Activated CD8-positive, alpha-beta T cell treated with anti-CD3 and anti-CD28 coated beads, Interleukin-2, amount 10 ng/mL, durations not matched to agents 7 days and 5 days (primary cell): ENCODE measurements at regions of chr2 and their contacts with region 1.

Region 1: GRCh38 chr2:128090945-128091725 is at the start of gene UGGT1:
- DNase-seq: peak; percentile 96
- ATAC-seq: peak; percentile 95
- H3K4me3 Mint-ChIP-seq: peak within 1 kb of the TSS; percentile 83
- H3K27ac Mint-ChIP-seq: peak within 1 kb of the TSS; percentile 93
- H3K4me1 Mint-ChIP-seq: peaks cover 41% of the 10 kb centered on the region
- H3K27me3 Mint-ChIP-seq: no peaks in the 10 kb centered on the region
- total RNA-seq, gene UGGT1: 60.3 to 63.7 TPM

Region 2: DNA sequence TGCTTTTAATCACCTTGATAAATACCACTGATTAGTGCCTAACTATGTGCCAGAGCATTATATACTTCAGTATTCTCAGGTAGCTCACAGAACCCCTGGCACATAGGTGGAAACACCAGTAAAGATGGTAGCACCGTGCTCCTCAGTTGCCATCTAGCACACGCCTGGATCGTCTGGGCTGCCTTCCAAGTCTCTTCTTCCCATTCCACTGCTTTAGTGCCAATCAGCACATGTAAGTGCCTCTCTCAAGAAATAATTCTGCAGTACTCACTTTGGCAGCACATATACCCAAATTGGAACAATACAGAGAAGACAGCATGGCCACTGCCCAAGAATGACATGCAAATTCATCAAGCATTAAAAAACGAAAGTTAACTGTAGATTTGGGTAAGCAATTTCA is 246.2 kb before region 1 on chr2:
- CTCF ChIA-PET with region 1: no interaction called
- POLR2A ChIA-PET with region 1: no interaction called
- DNase-seq: no peak
- ATAC-seq: no peak
- H3K4me3 Mint-ChIP-seq: no peak overlapping the region
- H3K27ac Mint-ChIP-seq: no peak overlapping the region
- H3K4me1 Mint-ChIP-seq: peaks cover 10% of the 10 kb centered on the region
- H3K27me3 Mint-ChIP-seq: no peaks in the 10 kb centered on the region

Region 3: GRCh38 chr2:128027801-128028667 is 63.1 kb before region 1 on chr2 and contains the start of gene SAP130:
- CTCF ChIA-PET with region 1: interaction called, 4 read pairs
- POLR2A ChIA-PET with region 1: interaction called, 54 read pairs
- DNase-seq: peak; percentile 99
- ATAC-seq: peak; percentile 77
- H3K4me3 Mint-ChIP-seq: peak within 1 kb of the TSS; percentile 97
- H3K27ac Mint-ChIP-seq: peak within 1 kb of the TSS; percentile 93
- H3K4me1 Mint-ChIP-seq: peaks cover 19% of the 10 kb centered on the region
- H3K27me3 Mint-ChIP-seq: peaks cover 5% of the 10 kb centered on the region
- total RNA-seq, gene SAP130: 37.8 to 39.2 TPM

Region 4: GRCh38 chr2:128064353-128064752 is 26.8 kb before region 1 on chr2:
- CTCF ChIA-PET with region 1: interaction called, 17 read pairs
- POLR2A ChIA-PET with region 1: no interaction called
- DNase-seq: no peak
- ATAC-seq: no peak
- H3K4me3 Mint-ChIP-seq: no peak overlapping the region
- H3K27ac Mint-ChIP-seq: no peak overlapping the region
- H3K4me1 Mint-ChIP-seq: no peaks in the 10 kb centered on the region
- H3K27me3 Mint-ChIP-seq: no peaks in the 10 kb centered on the region

Region 5: GRCh38 chr2:128103407-128103806 is 12.3 kb after region 1 on chr2:
- CTCF ChIA-PET with region 1: interaction called, 6 read pairs
- POLR2A ChIA-PET with region 1: interaction called, 17 read pairs
- DNase-seq: no peak
- ATAC-seq: no peak
- H3K4me3 Mint-ChIP-seq: no peak overlapping the region
- H3K27ac Mint-ChIP-seq: no peak overlapping the region
- H3K4me1 Mint-ChIP-seq: peaks cover 6% of the 10 kb centered on the region
- H3K27me3 Mint-ChIP-seq: no peaks in the 10 kb centered on the region